Activated naive CD4-positive, alpha-beta T cell treated with anti-CD3 and anti-CD28 coated beads for 36 hours (primary cell): ENCODE measurements at regions of chr20 and their contacts with region 1.

Region 1: DNA sequence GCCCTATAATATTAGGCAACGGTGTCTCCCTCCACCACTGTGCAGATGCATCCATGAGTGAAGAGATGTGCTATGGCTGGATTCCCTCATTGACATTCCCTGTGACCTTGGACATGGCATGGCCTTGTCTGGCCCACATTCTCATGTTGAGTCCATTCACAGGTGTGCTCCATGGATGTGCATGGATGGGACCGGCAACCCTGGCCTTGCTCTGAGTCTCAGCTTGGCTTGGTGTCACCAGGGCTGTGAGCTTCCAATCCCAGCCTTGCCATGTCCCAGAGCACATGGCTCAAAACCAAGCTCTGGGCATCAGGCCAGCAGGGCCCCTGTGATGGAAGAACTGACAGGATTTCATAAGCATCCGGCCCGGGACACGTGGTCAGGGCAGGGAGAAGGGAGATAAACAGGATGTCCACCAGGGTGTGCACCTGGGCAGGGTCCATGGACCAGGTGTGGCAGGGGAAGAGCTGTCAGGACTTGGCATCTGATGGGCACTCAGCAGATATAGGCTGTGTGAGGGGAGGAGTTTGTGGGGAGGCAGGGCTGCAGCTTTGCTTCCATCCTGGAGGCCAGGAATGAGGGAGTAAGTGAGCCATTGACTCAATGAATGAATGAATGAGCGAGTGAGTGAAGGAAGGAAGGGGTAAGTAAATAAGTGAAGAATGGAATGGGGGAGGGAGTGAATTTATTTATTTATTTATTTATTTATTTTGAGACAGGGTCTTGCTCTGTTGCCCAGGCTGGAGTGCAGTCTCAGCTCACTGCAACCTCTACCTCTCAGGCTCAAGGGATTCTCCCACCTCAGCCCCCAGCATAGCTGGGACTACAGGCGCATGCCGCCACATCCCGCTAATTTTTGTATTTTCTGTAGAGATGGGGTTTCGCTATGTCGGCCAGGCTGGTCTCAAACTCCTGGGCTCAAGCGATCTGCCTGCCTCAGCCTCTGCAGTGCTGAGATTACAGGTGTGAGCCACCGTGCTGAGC is 15.7 kb downstream of the NRSN2 start:
- DNase-seq: peak; percentile 83
- H3K4me3 Mint-ChIP-seq: peak overlapping the region; percentile 26
- H3K27ac Mint-ChIP-seq: peak overlapping the region; percentile 29
- H3K4me1 Mint-ChIP-seq: peaks cover 35% of the 10 kb centered on the region
- H3K27me3 Mint-ChIP-seq: no peaks in the 10 kb centered on the region

Region 2: DNA sequence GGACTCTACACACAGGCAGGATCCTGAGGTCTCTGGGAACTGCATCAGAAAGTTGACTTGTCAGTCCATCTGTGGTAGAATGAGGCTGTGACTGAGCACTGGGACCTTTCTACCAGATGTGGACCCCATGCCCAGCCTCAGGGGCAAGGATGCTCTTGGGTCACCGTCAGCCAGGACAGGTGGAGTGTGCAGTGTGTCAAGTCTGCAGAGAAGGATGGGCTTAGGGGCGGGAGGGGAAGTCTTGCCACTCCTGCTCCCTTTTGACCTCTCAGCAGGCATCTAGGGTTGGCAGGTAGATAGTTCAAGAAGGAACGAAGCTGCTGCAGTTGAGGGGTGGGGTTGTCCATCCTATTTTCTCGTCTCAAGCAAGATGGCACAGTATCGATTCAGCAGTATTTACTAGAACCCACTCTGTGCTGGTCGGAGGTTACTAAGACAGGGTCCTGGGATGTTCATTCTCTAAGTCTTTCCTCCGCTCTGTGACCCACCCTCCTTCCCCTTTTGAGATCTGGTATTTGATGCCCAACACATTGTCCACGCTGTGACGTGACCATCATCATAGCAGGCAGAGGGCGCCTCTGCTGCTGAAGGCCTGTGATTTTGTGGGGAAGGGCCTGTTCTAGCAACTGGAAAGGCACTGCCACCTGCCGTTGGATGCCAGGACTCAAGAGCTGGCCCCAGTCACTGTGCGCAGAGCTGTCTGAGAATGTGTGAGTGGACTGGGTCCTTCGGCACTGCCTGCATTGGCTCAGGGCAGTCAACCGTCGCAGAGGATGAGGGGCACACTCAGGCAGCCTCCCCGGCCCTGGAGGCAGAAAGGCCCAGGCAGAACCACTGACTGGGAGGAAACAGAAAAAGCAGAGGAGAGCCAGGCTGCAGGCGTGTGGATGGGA is 68.7 kb after region 1 on chr20:
- CTCF ChIA-PET with region 1: interaction called, 10 read pairs
- intact Hi-C with region 1: loop called (anchors 2 kb)
- DNase-seq: peak; percentile 75
- H3K4me3 Mint-ChIP-seq: no peak overlapping the region
- H3K27ac Mint-ChIP-seq: peak overlapping the region; percentile 89
- H3K4me1 Mint-ChIP-seq: peaks cover 57% of the 10 kb centered on the region
- H3K27me3 Mint-ChIP-seq: no peaks in the 10 kb centered on the region

Region 3: GRCh38 chr20:444862-445426 is 82.4 kb after region 1 on chr20:
- CTCF ChIA-PET with region 1: no interaction called
- intact Hi-C with region 1: no loop called
- DNase-seq: no peak
- H3K4me3 Mint-ChIP-seq: no peak overlapping the region
- H3K27ac Mint-ChIP-seq: no peak overlapping the region
- H3K4me1 Mint-ChIP-seq: peaks cover 11% of the 10 kb centered on the region
- H3K27me3 Mint-ChIP-seq: no peaks in the 10 kb centered on the region